CD4-positive, alpha-beta T cell (primary cell): ENCODE measurements at regions of chr9 and their contacts with region 1.

Region 1: DNA sequence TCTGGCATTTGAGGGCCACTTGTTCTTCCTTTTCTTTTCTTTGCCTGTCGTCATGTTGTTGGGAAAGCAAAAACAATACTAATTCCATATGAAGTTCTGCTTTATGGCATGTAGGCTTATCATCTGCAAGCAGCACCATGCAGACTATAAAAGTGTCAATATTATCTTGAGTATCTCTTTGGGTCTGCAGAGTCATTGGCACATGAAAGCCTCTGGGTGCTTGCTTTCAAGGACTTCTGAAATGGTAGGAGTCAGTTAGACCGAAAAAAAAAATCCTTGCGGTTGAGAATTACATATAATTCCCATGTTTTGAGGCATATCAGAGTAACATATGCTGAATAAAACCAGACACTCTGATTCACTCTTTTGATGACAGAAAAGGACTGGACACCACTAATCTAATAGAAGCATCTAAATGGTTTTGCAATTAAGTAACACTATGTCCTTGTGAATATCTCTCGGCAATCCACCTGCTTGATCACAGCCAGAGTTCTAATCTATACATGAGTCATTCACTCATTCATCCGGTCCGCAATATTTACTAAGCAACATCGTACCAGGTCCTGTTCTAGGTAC is 44.4 kb downstream of the GNAQ start:
- DNase-seq: no peak
- ATAC-seq: no peak
- H3K4me3 ChIP-seq: no peak overlapping the region
- H3K4me3 Mint-ChIP-seq: no peak overlapping the region
- H3K27ac ChIP-seq: no peak overlapping the region
- H3K27ac Mint-ChIP-seq: peak overlapping the region; percentile 28
- H3K4me1 ChIP-seq: peaks cover 15% of the 10 kb centered on the region
- H3K4me1 Mint-ChIP-seq: peaks cover 70% of the 10 kb centered on the region
- H3K27me3 ChIP-seq: no peaks in the 10 kb centered on the region
- H3K27me3 Mint-ChIP-seq: no peaks in the 10 kb centered on the region
- CTCF ChIP-seq: no peak

Region 2: DNA sequence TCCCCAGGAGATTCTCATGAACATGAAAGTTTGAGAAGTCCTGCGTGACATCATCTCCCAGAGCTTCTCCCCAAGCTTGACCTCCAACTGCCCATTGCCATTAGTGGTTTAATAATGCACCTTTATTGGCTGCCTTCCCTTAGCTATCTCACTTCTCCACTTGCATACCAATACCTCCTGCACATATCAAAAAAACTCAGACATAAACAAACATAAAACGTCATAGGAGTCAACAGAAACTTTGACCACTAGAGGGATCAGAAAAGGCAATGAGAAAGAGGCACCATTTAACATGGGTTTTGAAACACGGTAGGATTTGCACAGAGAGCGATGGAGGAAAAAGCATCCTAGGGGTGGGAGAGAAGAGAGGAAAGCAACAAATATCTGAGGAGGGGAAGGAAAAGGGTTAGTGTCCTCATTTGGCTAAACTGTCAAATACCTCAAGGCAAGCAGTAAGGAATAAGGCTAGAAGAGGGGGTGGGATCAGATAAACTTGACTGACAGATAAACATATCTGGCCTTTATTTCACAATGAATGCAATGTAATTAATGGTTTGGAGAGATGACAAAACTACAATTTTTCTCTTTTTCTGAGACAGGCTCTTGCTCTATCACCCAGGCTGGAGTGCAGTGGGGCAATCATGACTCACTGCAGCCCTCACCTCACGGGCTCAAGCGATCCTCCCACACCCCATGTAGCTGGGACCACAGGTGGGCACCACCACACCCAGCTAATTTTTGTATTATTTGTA is 17.5 kb after region 1 on chr9:
- CTCF ChIA-PET with region 1: no interaction called
- POLR2A ChIA-PET with region 1: no interaction called
- intact Hi-C with region 1: no loop called
- DNase-seq: peak in 3 of 14 experiments; percentile 21 to 44 (median 37)
- ATAC-seq: no peak
- H3K4me3 ChIP-seq: no peak overlapping the region
- H3K4me3 Mint-ChIP-seq: no peak overlapping the region
- H3K27ac ChIP-seq: no peak overlapping the region
- H3K27ac Mint-ChIP-seq: no peak overlapping the region
- H3K4me1 ChIP-seq: peaks cover 19% of the 10 kb centered on the region
- H3K4me1 Mint-ChIP-seq: peaks cover 73% of the 10 kb centered on the region
- H3K27me3 ChIP-seq: no peaks in the 10 kb centered on the region
- H3K27me3 Mint-ChIP-seq: no peaks in the 10 kb centered on the region
- CTCF ChIP-seq: no peak

Region 3: GRCh38 chr9:78023003-78023741 is 36.0 kb after region 1 on chr9:
- CTCF ChIA-PET with region 1: no interaction called
- POLR2A ChIA-PET with region 1: no interaction called
- intact Hi-C with region 1: loop called in 1 of 2 experiments (anchors 5 kb)
- DNase-seq: peak in 3 of 14 experiments; percentile 16 to 67 (median 58)
- ATAC-seq: peak; percentile 41
- H3K4me3 ChIP-seq: no peak overlapping the region
- H3K4me3 Mint-ChIP-seq: peak overlapping the region; percentile 73
- H3K27ac ChIP-seq: no peak overlapping the region
- H3K27ac Mint-ChIP-seq: no peak overlapping the region
- H3K4me1 ChIP-seq: peaks cover 26% of the 10 kb centered on the region
- H3K4me1 Mint-ChIP-seq: peaks cover 86% of the 10 kb centered on the region
- H3K27me3 ChIP-seq: no peaks in the 10 kb centered on the region
- H3K27me3 Mint-ChIP-seq: no peaks in the 10 kb centered on the region
- CTCF ChIP-seq: no peak